ENCODE measurements at regions of chr2 and their contacts with region 1.

Region 1: GRCh38 chr2:33529771-33530351 is 53.4 kb downstream of the RASGRP3 start:
- DNase-seq: no peak
- ATAC-seq: peak; percentile 33
- H3K4me3 Mint-ChIP-seq: peak overlapping the region; percentile 57
- H3K27ac Mint-ChIP-seq: peak overlapping the region; percentile 98
- H3K4me1 Mint-ChIP-seq: peaks cover 89% of the 10 kb centered on the region
- H3K27me3 Mint-ChIP-seq: no peaks in the 10 kb centered on the region
- CTCF ChIP-seq: no peak

Region 2: GRCh38 chr2:33426666-33427231 is 103.1 kb before region 1 on chr2:
- CTCF ChIA-PET with region 1: no interaction called
- POLR2A ChIA-PET with region 1: no interaction called
- intact Hi-C with region 1: no loop called
- DNase-seq: no peak
- ATAC-seq: no peak
- H3K4me3 Mint-ChIP-seq: no peak overlapping the region
- H3K27ac Mint-ChIP-seq: no peak overlapping the region
- H3K4me1 Mint-ChIP-seq: no peaks in the 10 kb centered on the region
- H3K27me3 Mint-ChIP-seq: no peaks in the 10 kb centered on the region
- CTCF ChIP-seq: no peak

Region 3: DNA sequence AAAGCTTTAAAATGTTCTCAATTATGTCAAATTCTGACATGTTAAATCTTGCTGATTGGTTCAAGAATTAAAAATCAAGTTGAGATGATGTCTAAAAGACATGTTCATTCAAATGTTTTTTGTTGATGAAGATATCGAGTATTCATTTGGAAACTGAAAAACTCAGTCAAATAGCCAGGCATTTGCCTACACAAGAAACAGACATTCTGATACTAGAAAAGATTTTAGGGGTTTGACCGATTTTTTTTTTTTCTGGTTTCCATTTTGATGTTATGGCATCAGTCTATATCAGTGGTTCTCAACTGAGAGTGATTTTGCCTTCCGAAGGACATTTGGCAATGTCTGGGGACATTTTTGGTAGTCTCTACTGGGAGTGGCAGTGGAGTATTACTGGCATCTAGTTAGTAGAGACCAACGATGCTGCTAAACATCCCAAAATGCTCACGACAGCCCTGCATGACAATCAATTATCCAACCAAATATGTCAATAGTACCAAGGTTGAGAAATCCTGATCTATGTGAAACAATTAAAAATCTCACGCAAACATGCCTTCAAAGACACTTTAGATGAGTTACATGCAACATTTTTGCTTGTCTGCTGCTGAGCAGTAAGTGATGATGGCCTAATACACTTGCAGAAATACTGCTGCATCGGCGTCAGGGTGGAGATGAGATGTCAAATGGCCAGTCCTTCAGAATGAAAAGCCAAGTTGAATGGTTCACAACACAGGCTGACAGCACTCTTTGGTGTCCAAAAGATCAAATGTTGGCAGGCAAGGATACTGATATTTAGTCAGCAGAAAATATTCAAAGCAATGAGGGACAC is 40.9 kb before region 1 on chr2:
- CTCF ChIA-PET with region 1: no interaction called
- POLR2A ChIA-PET with region 1: interaction called, 76 read pairs
- intact Hi-C with region 1: no loop called
- DNase-seq: no peak
- ATAC-seq: peak; percentile 19
- H3K4me3 Mint-ChIP-seq: peak overlapping the region; percentile 51
- H3K27ac Mint-ChIP-seq: peak overlapping the region; percentile 87
- H3K4me1 Mint-ChIP-seq: peaks cover 96% of the 10 kb centered on the region
- H3K27me3 Mint-ChIP-seq: no peaks in the 10 kb centered on the region
- CTCF ChIP-seq: no peak

Region 4: GRCh38 chr2:33497221-33497650 is 32.6 kb before region 1 on chr2:
- CTCF ChIA-PET with region 1: no interaction called
- POLR2A ChIA-PET with region 1: interaction called, 76 read pairs
- intact Hi-C with region 1: loop called (anchors 1 kb)
- DNase-seq: no peak
- ATAC-seq: peak; percentile 56
- H3K4me3 Mint-ChIP-seq: peak overlapping the region; percentile 62
- H3K27ac Mint-ChIP-seq: peak overlapping the region; percentile 87
- H3K4me1 Mint-ChIP-seq: peaks cover 96% of the 10 kb centered on the region
- H3K27me3 Mint-ChIP-seq: no peaks in the 10 kb centered on the region
- CTCF ChIP-seq: no peak

Region 5: DNA sequence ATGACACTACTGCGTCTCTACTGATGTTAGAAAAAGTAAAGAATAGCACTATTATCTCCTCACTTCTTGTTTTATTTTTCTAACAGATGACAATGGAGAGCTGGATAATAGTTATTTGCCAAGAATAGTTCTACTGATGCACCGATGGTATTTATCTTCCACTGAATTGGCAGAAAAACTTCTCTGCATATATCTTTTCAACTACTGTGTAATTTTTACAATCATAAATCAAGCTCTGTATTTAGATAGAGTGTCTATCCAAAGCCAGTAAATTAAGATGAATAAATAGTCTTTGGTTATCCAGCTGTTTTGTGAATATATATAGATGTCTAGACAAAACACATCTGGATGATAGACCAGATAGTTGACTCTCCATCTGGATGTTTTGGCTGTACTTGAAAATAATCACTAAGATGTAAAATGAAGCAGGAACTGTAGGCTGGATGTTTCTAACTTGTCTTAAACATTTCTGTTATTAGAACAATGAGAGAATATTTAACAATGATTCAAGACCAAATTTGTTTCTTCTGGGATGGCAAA is 13.3 kb before region 1 on chr2:
- CTCF ChIA-PET with region 1: interaction called, 3 read pairs
- POLR2A ChIA-PET with region 1: interaction called, 3 read pairs
- intact Hi-C with region 1: loop called (anchors 2 kb)
- DNase-seq: no peak
- ATAC-seq: no peak
- H3K4me3 Mint-ChIP-seq: no peak overlapping the region
- H3K27ac Mint-ChIP-seq: no peak overlapping the region
- H3K4me1 Mint-ChIP-seq: peaks cover 7% of the 10 kb centered on the region
- H3K27me3 Mint-ChIP-seq: no peaks in the 10 kb centered on the region
- CTCF ChIP-seq: no peak

Region 6: DNA sequence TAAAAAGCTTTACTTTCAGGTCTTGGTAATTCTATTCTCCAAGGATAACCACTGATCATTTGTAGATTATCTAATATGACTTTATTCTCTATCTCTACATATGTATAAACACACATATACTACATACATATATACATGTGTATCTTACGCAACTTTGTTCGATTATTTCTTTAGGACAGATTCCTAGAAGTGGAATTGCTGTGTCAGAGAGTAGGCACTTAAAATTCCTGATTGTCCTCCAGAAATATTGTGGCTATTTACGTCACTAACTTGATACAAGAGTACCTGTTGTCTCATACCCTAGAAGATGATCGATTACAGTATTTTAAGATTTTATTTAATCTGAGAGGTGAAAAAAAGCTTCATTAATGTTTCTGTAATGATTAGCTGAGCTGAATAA is 11.4 kb after region 1 on chr2:
- CTCF ChIA-PET with region 1: no interaction called
- POLR2A ChIA-PET with region 1: interaction called, 10 read pairs
- intact Hi-C with region 1: loop called (anchors 1 kb)
- DNase-seq: no peak
- ATAC-seq: no peak
- H3K4me3 Mint-ChIP-seq: no peak overlapping the region
- H3K27ac Mint-ChIP-seq: no peak overlapping the region
- H3K4me1 Mint-ChIP-seq: peaks cover 4% of the 10 kb centered on the region
- H3K27me3 Mint-ChIP-seq: no peaks in the 10 kb centered on the region
- CTCF ChIP-seq: no peak